Activated CD4-positive, alpha-beta T cell treated with anti-CD3 and anti-CD28 coated beads, Interleukin-2, amount 10 ng/mL, durations not matched to agents 24 days and 14 days (primary cell): ENCODE measurements at regions of chr11 and their contacts with region 1.

Region 1: DNA sequence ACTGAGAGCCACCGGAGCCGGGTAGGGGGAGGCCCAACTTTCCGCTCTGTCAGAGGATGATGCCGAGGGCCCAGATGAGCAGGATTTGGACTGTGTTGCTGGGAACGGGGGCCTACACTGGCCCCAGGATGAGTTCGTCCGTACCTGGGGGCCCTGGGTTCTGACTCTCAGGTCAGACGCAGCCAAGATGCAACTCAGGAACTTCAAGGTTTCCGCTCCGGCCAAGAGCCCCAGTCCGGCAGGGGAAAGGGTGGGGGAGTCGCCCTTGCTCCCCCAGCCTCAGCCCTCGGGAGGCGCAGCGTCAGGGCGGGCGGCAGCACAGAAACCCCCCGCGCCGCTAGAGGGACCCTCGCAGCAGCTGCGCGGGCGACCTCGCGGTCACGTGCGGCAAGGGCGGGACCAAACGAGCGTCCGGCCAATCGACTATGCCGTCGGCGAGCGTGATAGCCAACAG is 241 bp upstream of the ARL2 start:
- DNase-seq: peak; percentile 96
- H3K4me3 Mint-ChIP-seq: peak overlapping the region; percentile 92
- H3K27ac Mint-ChIP-seq: peak overlapping the region; percentile 98
- H3K4me1 Mint-ChIP-seq: peaks cover 24% of the 10 kb centered on the region
- H3K27me3 Mint-ChIP-seq: no peaks in the 10 kb centered on the region

Region 2: DNA sequence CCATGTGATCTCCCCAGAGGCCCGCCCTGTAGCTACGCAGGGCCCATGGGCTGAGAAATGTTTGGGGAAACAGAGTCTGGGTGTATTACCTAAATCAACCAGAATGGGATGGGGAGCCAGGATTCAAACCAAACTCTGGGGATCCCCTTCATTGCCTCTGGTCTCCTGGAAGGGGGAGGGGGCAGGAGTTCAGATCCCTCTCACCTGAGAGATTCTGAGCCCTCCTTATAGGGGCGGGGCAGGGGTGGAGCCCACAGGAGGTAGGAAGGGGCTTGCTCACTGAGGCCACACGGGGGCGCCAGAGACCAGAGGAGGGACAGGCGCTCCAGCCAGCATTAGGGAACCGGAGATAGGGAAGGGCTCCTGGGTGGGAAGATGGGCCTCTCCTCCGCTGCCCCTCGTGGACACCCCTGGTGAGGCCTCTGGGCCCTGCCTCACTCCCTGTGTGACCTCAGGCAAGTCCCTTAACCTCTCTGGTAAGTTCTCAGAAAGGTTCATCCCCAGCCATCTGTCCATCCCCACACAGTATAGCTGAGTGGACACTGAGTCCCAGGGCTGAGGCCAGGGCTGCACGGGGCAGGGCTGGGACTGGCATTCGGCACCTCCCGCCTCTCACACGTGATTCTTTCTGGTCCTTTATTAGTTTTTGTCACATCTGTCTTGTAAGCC is 166.6 kb before region 1 on chr11:
- intact Hi-C with region 1: loop called (anchors 2 kb)
- DNase-seq: peak; percentile 97
- H3K4me3 Mint-ChIP-seq: no peak overlapping the region
- H3K27ac Mint-ChIP-seq: no peak overlapping the region
- H3K4me1 Mint-ChIP-seq: peaks cover 46% of the 10 kb centered on the region
- H3K27me3 Mint-ChIP-seq: peaks cover 2% of the 10 kb centered on the region

Region 3: DNA sequence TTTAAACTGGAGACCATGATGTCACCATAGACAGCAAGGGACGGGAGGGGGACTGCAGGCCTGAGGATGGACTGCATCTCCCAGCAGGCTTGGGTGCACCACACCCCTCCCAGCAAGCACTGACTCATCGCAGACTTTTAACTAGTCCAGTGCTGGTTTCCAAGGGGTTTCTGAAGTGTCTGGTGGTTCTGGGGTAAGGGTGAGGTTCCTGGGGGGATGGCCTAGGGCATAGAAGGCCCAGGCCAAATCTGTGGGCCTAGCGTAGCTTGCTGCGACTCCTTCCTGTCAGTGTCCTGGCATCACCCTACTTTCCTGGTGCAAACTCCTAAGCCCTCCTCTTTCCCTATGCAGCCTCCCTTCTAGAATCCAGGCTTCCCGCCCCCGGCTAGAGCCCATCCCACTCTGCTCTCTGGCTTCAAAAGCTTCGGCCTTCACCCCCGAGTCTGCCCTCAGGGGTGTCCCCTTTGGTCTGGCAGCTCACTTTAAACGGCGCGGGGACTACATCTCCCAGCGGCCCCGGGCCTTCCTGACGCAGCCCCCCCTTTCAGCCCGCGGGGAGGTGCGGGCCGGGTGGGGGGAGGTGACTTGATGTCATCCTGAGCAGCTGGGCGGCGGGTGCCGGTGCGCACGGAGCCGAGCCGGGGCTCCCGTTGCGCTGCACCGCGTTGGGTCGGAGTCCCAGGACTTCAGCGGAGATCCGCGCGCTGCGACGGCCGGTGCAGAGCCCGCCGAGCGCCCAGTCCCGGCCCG is 89.4 kb before region 1 on chr11 and contains the start of gene PPP2R5B:
- intact Hi-C with region 1: loop called (anchors 1 kb)
- DNase-seq: peak; percentile 98
- H3K4me3 Mint-ChIP-seq: peak within 1 kb of the TSS; percentile 91
- H3K27ac Mint-ChIP-seq: peak within 1 kb of the TSS; percentile 99
- H3K4me1 Mint-ChIP-seq: peaks cover 10% of the 10 kb centered on the region
- H3K27me3 Mint-ChIP-seq: no peaks in the 10 kb centered on the region
- total RNA-seq, gene PPP2R5B: 11.4 and 16.7 TPM in 2 replicates

Region 4: DNA sequence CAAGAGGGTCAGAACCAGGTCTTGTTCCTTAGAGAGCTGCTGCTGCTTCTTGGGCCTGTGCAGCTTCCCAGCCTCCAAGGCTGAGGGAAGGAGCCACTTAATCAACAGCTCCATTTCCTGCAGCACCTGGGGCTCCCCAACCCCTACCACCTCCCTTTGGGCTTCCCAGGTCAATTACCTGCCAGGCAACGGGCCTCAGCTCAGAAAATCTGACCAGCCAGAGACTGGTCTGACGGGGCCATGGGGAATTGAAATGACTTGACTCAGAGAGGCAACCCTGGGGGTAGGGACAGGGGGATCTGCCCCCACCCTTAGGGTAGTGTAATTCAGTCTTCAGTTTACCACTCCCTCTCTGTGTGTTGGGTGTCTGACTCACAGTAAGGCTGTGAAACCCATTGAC is 37.1 kb before region 1 on chr11:
- intact Hi-C with region 1: no loop called
- DNase-seq: no peak
- H3K4me3 Mint-ChIP-seq: no peak overlapping the region
- H3K27ac Mint-ChIP-seq: no peak overlapping the region
- H3K4me1 Mint-ChIP-seq: peaks cover 5% of the 10 kb centered on the region
- H3K27me3 Mint-ChIP-seq: no peaks in the 10 kb centered on the region

Region 5: GRCh38 chr11:65040847-65041621 is 27.3 kb after region 1 on chr11 and contains the start of gene SAC3D1:
- intact Hi-C with region 1: loop called (anchors 1 kb)
- DNase-seq: peak; percentile 98
- H3K4me3 Mint-ChIP-seq: peak within 1 kb of the TSS; percentile 93
- H3K27ac Mint-ChIP-seq: peak within 1 kb of the TSS; percentile 95
- H3K4me1 Mint-ChIP-seq: peaks cover 20% of the 10 kb centered on the region
- H3K27me3 Mint-ChIP-seq: no peaks in the 10 kb centered on the region
- total RNA-seq, gene SAC3D1: 16.3 and 18.0 TPM in 2 replicates

Region 6: GRCh38 chr11:65069217-65069616 is 55.5 kb after region 1 on chr11:
- intact Hi-C with region 1: no loop called
- DNase-seq: no peak
- H3K4me3 Mint-ChIP-seq: no peak overlapping the region
- H3K27ac Mint-ChIP-seq: no peak overlapping the region
- H3K4me1 Mint-ChIP-seq: no peaks in the 10 kb centered on the region
- H3K27me3 Mint-ChIP-seq: no peaks in the 10 kb centered on the region

Region 7: GRCh38 chr11:65111744-65112414 is 98.2 kb after region 1 on chr11 and contains the start of gene TM7SF2:
- intact Hi-C with region 1: loop called (anchors 1 kb)
- DNase-seq: peak; percentile 98
- H3K4me3 Mint-ChIP-seq: peak within 1 kb of the TSS; percentile 98
- H3K27ac Mint-ChIP-seq: peak within 1 kb of the TSS; percentile 93
- H3K4me1 Mint-ChIP-seq: peaks cover 25% of the 10 kb centered on the region
- H3K27me3 Mint-ChIP-seq: no peaks in the 10 kb centered on the region
- total RNA-seq, gene TM7SF2: 28.2 and 28.9 TPM in 2 replicates

Region 8: GRCh38 chr11:65401073-65401802 is 387.5 kb after region 1 on chr11:
- intact Hi-C with region 1: no loop called
- DNase-seq: no peak
- H3K4me3 Mint-ChIP-seq: no peak overlapping the region
- H3K27ac Mint-ChIP-seq: no peak overlapping the region
- H3K4me1 Mint-ChIP-seq: peaks cover 11% of the 10 kb centered on the region
- H3K27me3 Mint-ChIP-seq: no peaks in the 10 kb centered on the region